GM13977 (cell line): ENCODE measurements at regions of chr14 and their contacts with region 1.

Region 1: DNA sequence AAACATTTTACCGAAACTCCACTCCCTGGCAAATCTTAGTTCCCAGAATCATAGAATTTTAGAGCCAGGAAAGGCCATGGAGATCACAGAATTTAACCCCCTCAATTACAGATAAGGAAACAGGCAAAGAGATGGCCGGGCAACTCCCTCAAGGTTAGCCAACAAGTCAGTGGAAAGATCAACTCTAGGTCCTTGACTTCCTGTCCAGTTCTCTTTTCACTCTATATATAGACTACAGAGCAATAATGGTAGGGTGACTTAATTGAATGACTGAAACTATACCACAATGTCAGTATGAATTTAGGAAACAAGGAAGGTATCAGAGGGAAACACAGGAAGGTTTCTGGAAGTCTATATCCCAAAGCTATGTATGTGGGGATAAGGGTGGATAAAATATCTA is 11.6 kb downstream of the OXA1L start:
- DNase-seq: no peak
- CTCF ChIP-seq: no peak

Region 2: GRCh38 chr14:22819151-22819988 is 41.3 kb after region 1 on chr14:
- in situ Hi-C with region 1: loop called (anchors 5 kb)
- DNase-seq: peak; percentile 41
- CTCF ChIP-seq: no peak